PC-3 (cell line): ENCODE measurements at regions of chr12 and their contacts with region 1.

Region 1: GRCh38 chr12:64796208-64796845 is 28.1 kb upstream of the TBC1D30 start:
- DNase-seq: peak; percentile 98
- ATAC-seq: peak; percentile 80
- H3K4me3 ChIP-seq: peak overlapping the region; percentile 20; the same call in 1 of the 2 replicates
- H3K27ac ChIP-seq: peak overlapping the region; percentile 52
- H3K4me1 ChIP-seq: peaks cover 25% of the 10 kb centered on the region
- H3K27me3 ChIP-seq: no peaks in the 10 kb centered on the region
- CTCF ChIP-seq: peak; percentile 91

Region 2: GRCh38 chr12:64733857-64734256 is 62.5 kb before region 1 on chr12:
- CTCF ChIA-PET with region 1: interaction called, 5 read pairs
- POLR2A ChIA-PET with region 1: no interaction called
- intact Hi-C with region 1: loop called (anchors 10 kb)
- DNase-seq: peak; percentile 99
- ATAC-seq: peak; percentile 98
- H3K4me3 ChIP-seq: peak overlapping the region; percentile 20; the same call in 1 of the 2 replicates
- H3K27ac ChIP-seq: peak overlapping the region; percentile 15; the same call in 1 of the 2 replicates
- H3K4me1 ChIP-seq: peaks cover 22% of the 10 kb centered on the region
- H3K27me3 ChIP-seq: no peaks in the 10 kb centered on the region
- CTCF ChIP-seq: no peak

Region 3: DNA sequence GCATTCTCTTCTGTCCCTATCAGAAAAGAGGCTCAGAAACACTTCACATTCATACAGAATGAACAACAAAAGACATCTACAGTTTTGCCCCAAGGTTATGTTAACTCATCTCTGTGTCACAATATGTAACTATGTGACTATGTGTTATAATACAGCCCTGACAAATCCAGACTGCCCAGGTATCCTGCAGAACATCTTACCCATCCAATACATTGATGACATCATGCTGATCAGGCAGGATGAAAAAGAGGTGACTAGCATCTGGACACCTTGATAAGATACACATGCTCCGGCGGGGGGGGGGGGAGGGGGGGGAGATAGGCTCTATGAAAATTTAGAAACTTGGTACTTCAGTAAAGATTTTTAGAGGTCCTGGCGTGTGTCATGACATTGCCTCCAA is 28.8 kb before region 1 on chr12:
- CTCF ChIA-PET with region 1: no interaction called
- POLR2A ChIA-PET with region 1: no interaction called
- intact Hi-C with region 1: no loop called
- DNase-seq: peak; percentile 75
- ATAC-seq: peak; percentile 46
- H3K4me3 ChIP-seq: no peak overlapping the region
- H3K27ac ChIP-seq: no peak overlapping the region
- H3K4me1 ChIP-seq: peaks cover 8% of the 10 kb centered on the region
- H3K27me3 ChIP-seq: no peaks in the 10 kb centered on the region
- CTCF ChIP-seq: no peak

Region 4: GRCh38 chr12:64780531-64781279 is 15.6 kb before region 1 on chr12:
- CTCF ChIA-PET with region 1: interaction called, 10 read pairs
- POLR2A ChIA-PET with region 1: no interaction called
- intact Hi-C with region 1: no loop called
- DNase-seq: peak; percentile 59
- ATAC-seq: peak; percentile 80
- H3K4me3 ChIP-seq: peak overlapping the region; percentile 89
- H3K27ac ChIP-seq: peak overlapping the region; percentile 15; the same call in 1 of the 2 replicates
- H3K4me1 ChIP-seq: peaks cover 17% of the 10 kb centered on the region
- H3K27me3 ChIP-seq: no peaks in the 10 kb centered on the region
- CTCF ChIP-seq: peak; percentile 7; the same call in 1 of the 2 replicates

Region 5: GRCh38 chr12:64813723-64814122 is 17.4 kb after region 1 on chr12:
- CTCF ChIA-PET with region 1: interaction called, 11 read pairs
- POLR2A ChIA-PET with region 1: no interaction called
- intact Hi-C with region 1: no loop called
- DNase-seq: peak; percentile 72
- ATAC-seq: peak; percentile 77
- H3K4me3 ChIP-seq: no peak overlapping the region
- H3K27ac ChIP-seq: peak overlapping the region; percentile 46
- H3K4me1 ChIP-seq: peaks cover 36% of the 10 kb centered on the region
- H3K27me3 ChIP-seq: no peaks in the 10 kb centered on the region
- CTCF ChIP-seq: no peak

Region 6: DNA sequence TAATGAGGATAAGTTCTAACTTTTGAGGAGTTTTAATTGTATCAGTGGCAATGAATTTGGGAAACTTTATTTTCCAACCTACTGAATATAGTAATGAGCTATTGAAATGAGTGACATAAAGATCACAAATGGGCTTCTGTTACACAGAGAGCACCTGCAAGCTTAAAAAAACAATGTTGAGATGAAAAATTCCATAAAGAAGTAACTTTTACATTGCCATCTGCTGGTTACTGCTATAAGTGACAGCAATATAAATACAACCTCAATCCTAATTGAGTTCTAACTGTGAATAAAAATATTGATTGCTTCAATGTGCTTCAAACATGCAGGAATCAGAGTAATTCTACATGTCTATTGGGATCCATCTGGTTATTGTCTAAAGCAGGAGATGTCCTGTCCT is 310.6 kb after region 1 on chr12:
- CTCF ChIA-PET with region 1: interaction called, 19 read pairs
- POLR2A ChIA-PET with region 1: no interaction called
- intact Hi-C with region 1: loop called (anchors 2 kb)
- DNase-seq: peak; percentile 56
- ATAC-seq: peak; percentile 18; the same call in 1 of the 2 replicates
- H3K4me3 ChIP-seq: no peak overlapping the region
- H3K27ac ChIP-seq: no peak overlapping the region
- H3K4me1 ChIP-seq: no peaks in the 10 kb centered on the region
- H3K27me3 ChIP-seq: no peaks in the 10 kb centered on the region
- CTCF ChIP-seq: peak; percentile 72

Region 7: DNA sequence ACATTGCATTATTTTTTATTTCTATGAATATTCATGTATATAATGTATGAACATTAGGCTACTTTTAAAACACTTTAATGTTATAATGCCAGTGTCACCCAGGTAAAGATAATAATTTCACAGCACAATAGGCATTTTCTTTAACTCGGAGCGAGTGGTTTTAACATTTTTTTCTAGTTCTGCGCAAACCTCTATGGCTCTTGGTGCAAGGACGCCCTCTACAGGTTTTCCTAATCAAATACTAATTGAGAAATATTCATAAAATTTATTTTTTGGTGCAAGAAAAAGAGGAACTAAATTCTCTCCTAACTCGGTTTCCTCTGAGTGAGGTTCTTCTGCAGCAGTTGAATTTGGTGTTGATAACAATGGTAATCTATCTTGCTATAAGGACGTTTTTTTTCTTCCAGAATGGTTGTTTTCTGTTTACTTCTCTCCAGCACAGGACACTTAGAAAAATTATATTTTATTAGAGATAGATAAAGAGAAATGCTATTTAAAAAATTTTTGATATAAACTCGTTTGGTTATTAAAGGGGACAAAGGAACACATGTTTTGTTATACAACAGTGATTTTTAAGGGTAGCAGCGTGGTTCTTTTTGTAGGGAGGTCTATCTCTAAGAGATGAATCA is 327.2 kb after region 1 on chr12:
- CTCF ChIA-PET with region 1: interaction called, 7 read pairs
- POLR2A ChIA-PET with region 1: no interaction called
- intact Hi-C with region 1: loop called (anchors 2 kb)
- DNase-seq: peak; percentile 66
- ATAC-seq: no peak; the same call in 1 of the 2 replicates
- H3K4me3 ChIP-seq: no peak overlapping the region
- H3K27ac ChIP-seq: no peak overlapping the region
- H3K4me1 ChIP-seq: peaks cover 7% of the 10 kb centered on the region
- H3K27me3 ChIP-seq: peaks cover 51% of the 10 kb centered on the region
- CTCF ChIP-seq: peak; percentile 86